Calu3 (cell line): ENCODE measurements at regions of chr6 and their contacts with region 1.

Region 1: GRCh38 chr6:20652299-20653084 is 118.2 kb downstream of the CDKAL1 start:
- DNase-seq: no peak
- H3K4me3 Mint-ChIP-seq: peak overlapping the region; percentile 54
- H3K27ac Mint-ChIP-seq: peak overlapping the region; percentile 96
- H3K4me1 Mint-ChIP-seq: peaks cover 72% of the 10 kb centered on the region
- H3K27me3 Mint-ChIP-seq: no peaks in the 10 kb centered on the region
- CTCF ChIP-seq: no peak

Region 2: DNA sequence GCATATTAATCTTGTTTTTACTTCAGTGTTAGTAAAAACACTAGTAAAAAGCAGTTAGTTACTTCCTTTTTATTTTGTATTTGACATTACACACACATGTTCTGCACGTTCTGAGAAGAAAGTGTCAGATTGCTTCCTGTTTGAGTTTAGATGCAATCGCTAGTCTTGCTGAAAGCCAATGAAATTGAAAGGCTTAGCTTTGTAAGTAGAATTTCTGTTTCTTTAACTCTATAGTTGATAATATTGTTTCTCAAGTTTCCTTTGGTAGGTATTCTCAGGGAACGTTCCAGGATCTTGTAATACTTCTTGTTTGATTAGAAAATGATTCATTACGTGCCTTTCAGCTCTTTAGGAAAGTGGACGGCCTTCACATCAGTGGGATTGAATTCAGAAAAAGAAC is 63.2 kb before region 1 on chr6:
- CTCF ChIA-PET with region 1: no interaction called
- intact Hi-C with region 1: loop called (anchors 5 kb)
- DNase-seq: peak; percentile 8
- H3K4me3 Mint-ChIP-seq: no peak overlapping the region
- H3K27ac Mint-ChIP-seq: peak overlapping the region; percentile 23
- H3K4me1 Mint-ChIP-seq: no peaks in the 10 kb centered on the region
- H3K27me3 Mint-ChIP-seq: no peaks in the 10 kb centered on the region
- CTCF ChIP-seq: no peak

Region 3: GRCh38 chr6:20630617-20631548 is 21.6 kb before region 1 on chr6:
- CTCF ChIA-PET with region 1: no interaction called
- intact Hi-C with region 1: no loop called
- DNase-seq: no peak
- H3K4me3 Mint-ChIP-seq: no peak overlapping the region
- H3K27ac Mint-ChIP-seq: peak overlapping the region; percentile 1
- H3K4me1 Mint-ChIP-seq: peaks cover 44% of the 10 kb centered on the region
- H3K27me3 Mint-ChIP-seq: no peaks in the 10 kb centered on the region
- CTCF ChIP-seq: no peak

Region 4: DNA sequence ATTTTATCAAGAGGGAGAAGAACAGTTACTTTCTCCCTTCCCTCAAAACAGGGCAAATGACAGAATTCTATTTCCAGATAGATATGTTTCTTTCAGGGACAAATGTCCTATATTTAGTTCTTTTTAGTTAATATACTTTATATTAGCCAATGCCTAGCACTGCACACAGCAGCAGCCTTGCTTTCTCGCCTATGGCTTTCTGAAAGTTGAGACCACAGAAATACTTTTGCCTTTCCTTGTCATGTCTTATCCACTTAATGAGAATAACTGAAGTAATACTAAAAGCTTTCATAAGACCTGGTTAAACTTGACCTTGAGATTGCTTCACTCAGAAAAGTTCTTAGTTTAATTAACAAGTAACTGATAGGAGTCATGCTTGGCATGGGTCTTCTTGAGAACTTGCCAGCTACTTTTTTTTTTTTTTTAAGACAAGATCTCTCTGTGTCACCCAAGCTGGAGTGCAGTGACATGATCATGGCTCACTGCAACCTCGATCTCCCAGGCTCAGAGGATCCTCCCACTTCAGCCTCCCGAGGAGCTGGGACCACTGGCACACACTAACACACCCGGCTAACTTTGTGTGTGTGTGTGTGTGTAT is 41.1 kb after region 1 on chr6:
- CTCF ChIA-PET with region 1: no interaction called
- intact Hi-C with region 1: no loop called
- DNase-seq: peak; percentile 26
- H3K4me3 Mint-ChIP-seq: no peak overlapping the region
- H3K27ac Mint-ChIP-seq: peak overlapping the region; percentile 21
- H3K4me1 Mint-ChIP-seq: peaks cover 42% of the 10 kb centered on the region
- H3K27me3 Mint-ChIP-seq: no peaks in the 10 kb centered on the region
- CTCF ChIP-seq: no peak

Region 5: DNA sequence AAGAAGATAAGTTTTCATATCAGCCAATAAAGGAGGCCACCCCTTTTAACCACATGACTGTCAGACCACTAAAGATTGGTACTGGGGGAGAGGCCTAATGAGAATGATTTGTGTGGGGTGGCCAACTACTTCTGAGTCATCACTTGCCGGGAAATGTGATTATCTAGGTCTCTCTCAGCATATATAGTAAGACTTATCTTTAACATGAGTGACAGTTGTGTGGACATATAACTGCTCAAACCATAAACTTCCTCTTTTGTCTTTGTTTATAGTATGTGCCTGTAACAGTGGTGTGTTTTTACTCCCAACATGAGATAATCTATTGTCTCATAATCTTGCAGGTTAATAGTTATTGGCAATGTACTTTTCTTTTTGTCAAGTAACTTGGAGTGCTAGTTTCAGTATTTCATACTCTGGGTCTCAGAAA is 194.1 kb after region 1 on chr6:
- CTCF ChIA-PET with region 1: no interaction called
- intact Hi-C with region 1: no loop called
- DNase-seq: no peak
- H3K4me3 Mint-ChIP-seq: no peak overlapping the region
- H3K27ac Mint-ChIP-seq: no peak overlapping the region
- H3K4me1 Mint-ChIP-seq: peaks cover 11% of the 10 kb centered on the region
- H3K27me3 Mint-ChIP-seq: no peaks in the 10 kb centered on the region
- CTCF ChIP-seq: no peak